Activated T-helper 2 cell treated with anti-CD3 and anti-CD28 coated beads, Interferon-gamma antibody, Interleukin-2, Interleukin-4, amounts not matched to agents 10 μg/mL and 5 μg/mL and 100 μg/mL, durations not matched to agents 14 hours and 24 hours and 36 hours (primary cell): ENCODE measurements at regions of chr2 and their contacts with region 1.

Region 1: DNA sequence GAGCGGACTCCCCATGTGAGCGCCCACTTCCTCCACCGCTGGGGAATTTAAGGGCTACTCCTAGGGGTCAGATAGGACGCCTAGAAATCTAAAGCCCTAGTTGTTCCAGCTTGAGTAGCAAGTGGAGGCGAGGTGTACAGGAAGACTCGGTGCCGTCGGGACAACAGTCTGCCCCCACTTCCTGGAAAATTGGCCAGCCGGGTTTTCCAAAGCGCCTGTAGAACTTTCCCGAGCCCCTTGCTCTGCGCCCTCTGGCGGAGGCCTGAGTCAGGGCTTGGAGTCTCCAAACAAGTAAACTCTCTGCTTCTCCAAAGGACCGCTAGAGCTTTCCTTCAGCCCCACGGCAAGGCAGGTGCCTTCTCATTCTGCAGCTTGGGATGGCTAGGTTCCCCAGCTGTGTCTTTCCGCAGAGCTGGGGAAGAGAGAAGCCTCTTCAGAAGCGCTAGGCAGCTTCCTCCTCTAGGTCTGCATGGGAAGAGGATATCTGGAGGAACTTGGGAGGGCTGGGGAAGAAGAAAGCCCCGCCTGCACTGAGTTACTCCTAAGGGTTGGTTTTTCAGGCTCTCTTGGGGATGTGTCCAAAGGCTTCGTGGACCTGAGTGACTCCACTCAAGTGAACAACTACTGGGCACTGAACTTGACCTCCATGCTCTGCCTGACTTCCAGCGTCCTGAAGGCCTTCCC is 688 bp downstream of the SPR start:
- DNase-seq: peak; percentile 36
- H3K4me3 Mint-ChIP-seq: peak overlapping the region; percentile 77
- H3K27ac Mint-ChIP-seq: no peak overlapping the region
- H3K4me1 Mint-ChIP-seq: peaks cover 1% of the 10 kb centered on the region
- H3K27me3 Mint-ChIP-seq: peaks cover 24% of the 10 kb centered on the region

Region 2: DNA sequence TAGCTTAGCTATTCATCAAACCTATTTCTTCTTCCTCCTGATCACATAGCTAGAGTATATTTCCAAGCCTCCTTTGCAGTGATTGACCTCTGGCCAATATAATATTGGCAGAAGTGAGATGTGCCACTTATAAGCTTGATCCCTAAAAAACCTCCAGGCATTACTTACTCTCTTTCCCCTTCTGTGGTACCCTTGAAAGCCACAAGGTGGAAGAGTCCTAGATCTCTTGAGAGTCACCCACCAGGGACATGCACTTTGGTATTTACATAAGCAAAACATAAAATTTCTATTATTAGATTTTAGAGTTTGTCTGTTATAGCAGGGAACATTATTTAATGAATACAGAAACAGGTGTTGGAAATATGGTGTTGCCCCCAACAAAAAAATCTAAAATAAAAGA is 174.0 kb before region 1 on chr2:
- intact Hi-C with region 1: no loop called
- DNase-seq: no peak
- H3K4me3 Mint-ChIP-seq: no peak overlapping the region
- H3K27ac Mint-ChIP-seq: no peak overlapping the region
- H3K4me1 Mint-ChIP-seq: no peaks in the 10 kb centered on the region
- H3K27me3 Mint-ChIP-seq: no peaks in the 10 kb centered on the region

Region 3: GRCh38 chr2:72915907-72916742 is 28.2 kb after region 1 on chr2:
- intact Hi-C with region 1: no loop called
- DNase-seq: no peak
- H3K4me3 Mint-ChIP-seq: no peak overlapping the region
- H3K27ac Mint-ChIP-seq: no peak overlapping the region
- H3K4me1 Mint-ChIP-seq: peaks cover 8% of the 10 kb centered on the region
- H3K27me3 Mint-ChIP-seq: peaks cover 71% of the 10 kb centered on the region

Region 4: GRCh38 chr2:72973566-72974435 is 85.9 kb after region 1 on chr2:
- intact Hi-C with region 1: loop called (anchors 1 kb)
- DNase-seq: peak; percentile 28
- H3K4me3 Mint-ChIP-seq: no peak overlapping the region
- H3K27ac Mint-ChIP-seq: no peak overlapping the region
- H3K4me1 Mint-ChIP-seq: no peaks in the 10 kb centered on the region
- H3K27me3 Mint-ChIP-seq: peaks cover 5% of the 10 kb centered on the region